ENCODE measurements at regions of chr15 and their contacts with region 1.

Region 1: GRCh38 chr15:50758762-50759161 is 6.7 kb downstream of the SPPL2A start:
- DNase-seq: no peak
- H3K4me3 ChIP-seq: no peak overlapping the region
- H3K4me3 Mint-ChIP-seq: no peak overlapping the region
- H3K27ac ChIP-seq: no peak overlapping the region
- H3K27ac Mint-ChIP-seq: no peak overlapping the region
- H3K4me1 ChIP-seq: peaks cover 27% of the 10 kb centered on the region
- H3K4me1 Mint-ChIP-seq: peaks cover 27 to 62% (median 35%) of the 10 kb centered on the region in 4 donors
- H3K27me3 ChIP-seq: no peaks in the 10 kb centered on the region
- H3K27me3 Mint-ChIP-seq: no peaks in the 10 kb centered on the region

Region 2: DNA sequence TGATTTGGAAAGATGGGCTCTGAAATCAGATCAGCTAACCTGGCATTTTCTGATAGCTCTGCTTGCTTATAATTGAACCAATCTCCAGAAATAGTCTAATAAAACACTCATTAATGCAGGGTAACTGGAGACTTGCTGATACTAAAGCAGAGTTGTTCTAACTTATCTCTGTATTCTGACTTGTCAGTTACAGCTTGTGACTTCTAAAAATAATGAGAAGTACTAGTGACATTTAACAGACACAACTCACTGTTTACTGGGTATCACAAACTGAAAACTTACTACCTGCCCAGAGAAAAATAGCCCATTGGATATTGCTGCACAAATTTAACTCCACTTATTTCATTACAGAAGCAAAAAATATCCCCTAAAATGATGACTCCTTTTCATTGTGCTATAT is 48.2 kb before region 1 on chr15:
- CTCF ChIA-PET with region 1: no interaction called
- POLR2A ChIA-PET with region 1: no interaction called
- intact Hi-C with region 1: loop called (anchors 2 kb)
- DNase-seq: no peak
- H3K4me3 ChIP-seq: no peak overlapping the region
- H3K4me3 Mint-ChIP-seq: no peak overlapping the region
- H3K27ac ChIP-seq: no peak overlapping the region
- H3K27ac Mint-ChIP-seq: peak overlapping the region in 1 of 7 donors; percentile 64
- H3K4me1 ChIP-seq: no peaks in the 10 kb centered on the region
- H3K4me1 Mint-ChIP-seq: no peaks in the 10 kb centered on the region
- H3K27me3 ChIP-seq: no peaks in the 10 kb centered on the region
- H3K27me3 Mint-ChIP-seq: no peaks in the 10 kb centered on the region

Measured in CD4-positive, alpha-beta memory T cell (primary cell).